Heart right ventricle (tissue), 16 donors: ENCODE measurements at regions of chr18 and their contacts with region 1.

Region 1: GRCh38 chr18:22563098-22563707 is 145.5 kb upstream of the CTAGE1 start:
- DNase-seq: peak in 1 of 2 donors; percentile 68
- ATAC-seq: peak; percentile 63 to 77 (median 72)
- H3K4me3 ChIP-seq: peak overlapping the region in 9 of 10 donors; percentile 19 to 74 (median 57)
- H3K27ac ChIP-seq: peak overlapping the region; percentile 87 to 99 (median 96)
- H3K4me1 ChIP-seq: peaks cover 0 to 38% (median 27%) of the 10 kb centered on the region in 9 donors
- H3K27me3 ChIP-seq: peaks cover 0 to 47% (median 0%) of the 10 kb centered on the region in 7 donors
- CTCF ChIP-seq: peak; percentile 56 to 87 (median 82)

Region 2: GRCh38 chr18:21914739-21915319 is 648.4 kb before region 1 on chr18:
- intact Hi-C with region 1: loop called in 6 of 10 experiments (anchors 5 to 10 kb)
- DNase-seq: peak in 1 of 2 donors; percentile 13
- ATAC-seq: peak in 7 of 8 donors; percentile 55 to 79 (median 65)
- H3K4me3 ChIP-seq: no peak overlapping the region
- H3K27ac ChIP-seq: no peak overlapping the region
- H3K4me1 ChIP-seq: no peaks in the 10 kb centered on the region
- H3K27me3 ChIP-seq: no peaks in the 10 kb centered on the region
- CTCF ChIP-seq: peak in 8 of 9 donors; percentile 20 to 67 (median 56)

Region 3: DNA sequence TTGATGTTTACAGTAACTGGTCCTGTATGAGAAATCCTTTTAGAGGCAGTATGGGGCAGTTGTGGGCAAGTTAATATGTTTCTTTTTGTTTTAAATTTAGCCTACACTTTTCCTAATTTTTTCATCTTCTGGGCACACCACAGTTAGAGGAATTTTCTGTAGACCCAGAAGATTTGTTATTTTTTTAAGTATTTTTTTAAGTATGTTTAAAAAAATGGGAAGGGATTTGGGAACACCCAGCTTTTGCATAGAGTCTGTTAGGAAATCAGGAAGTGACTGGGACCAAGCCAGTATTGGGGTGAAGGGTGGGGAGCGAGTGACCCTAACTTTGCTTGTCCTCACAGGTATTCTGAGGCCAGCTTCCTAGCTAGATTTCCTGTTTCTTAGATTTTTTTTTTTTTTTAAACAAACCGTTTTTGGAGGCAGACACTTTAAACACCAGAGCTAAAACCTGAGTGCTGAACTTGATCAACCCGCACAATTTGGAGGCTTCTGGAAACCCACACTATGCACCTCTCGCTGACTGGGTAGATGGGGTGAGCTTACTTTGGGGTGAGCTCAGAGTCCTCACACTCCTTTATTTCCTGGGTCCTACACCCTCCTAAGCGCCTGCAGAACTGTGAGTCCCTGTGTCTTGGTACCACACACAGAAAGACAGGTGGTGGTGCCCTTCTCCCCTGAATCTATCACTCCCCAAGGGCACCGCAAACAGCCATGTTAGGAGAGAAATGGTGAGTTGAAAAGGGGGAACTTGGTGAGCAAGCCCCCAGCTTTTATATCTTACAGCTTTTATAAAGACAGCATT is 388.7 kb before region 1 on chr18:
- intact Hi-C with region 1: loop called (anchors 2 to 10 kb)
- DNase-seq: no peak
- ATAC-seq: peak in 5 of 8 donors; percentile 16 to 62 (median 44)
- H3K4me3 ChIP-seq: peak overlapping the region; percentile 23 to 97 (median 85)
- H3K27ac ChIP-seq: peak overlapping the region; percentile 80 to 100 (median 97)
- H3K4me1 ChIP-seq: peaks cover 0 to 34% (median 11%) of the 10 kb centered on the region in 9 donors
- H3K27me3 ChIP-seq: peaks cover 0 to 98% (median 0%) of the 10 kb centered on the region in 7 donors
- CTCF ChIP-seq: peak in 5 of 9 donors; percentile 4 to 35 (median 30)

Region 4: GRCh38 chr18:22348521-22349316 is 214.5 kb before region 1 on chr18:
- intact Hi-C with region 1: loop called in 4 of 10 experiments (anchors 2 to 5 kb)
- DNase-seq: peak; percentile 68 to 81
- ATAC-seq: peak; percentile 67 to 79 (median 74)
- H3K4me3 ChIP-seq: peak overlapping the region; percentile 18 to 65 (median 58)
- H3K27ac ChIP-seq: peak overlapping the region; percentile 88 to 97 (median 94)
- H3K4me1 ChIP-seq: peaks cover 10 to 64% (median 44%) of the 10 kb centered on the region in 9 donors
- H3K27me3 ChIP-seq: peaks cover 0 to 45% (median 0%) of the 10 kb centered on the region in 7 donors
- CTCF ChIP-seq: peak in 1 of 9 donors; percentile 17

Region 5: GRCh38 chr18:22385718-22386117 is 177.5 kb before region 1 on chr18:
- intact Hi-C with region 1: loop called in 1 of 10 experiments (anchors 10 kb)
- DNase-seq: no peak
- ATAC-seq: no peak
- H3K4me3 ChIP-seq: no peak overlapping the region
- H3K27ac ChIP-seq: peak overlapping the region in 1 of 10 donors; percentile 8
- H3K4me1 ChIP-seq: peaks cover 0 to 11% (median 0%) of the 10 kb centered on the region in 9 donors
- H3K27me3 ChIP-seq: no peaks in the 10 kb centered on the region
- CTCF ChIP-seq: no peak

Region 6: GRCh38 chr18:22459491-22459890 is 103.7 kb before region 1 on chr18:
- intact Hi-C with region 1: no loop called
- DNase-seq: no peak
- ATAC-seq: no peak
- H3K4me3 ChIP-seq: no peak overlapping the region
- H3K27ac ChIP-seq: no peak overlapping the region
- H3K4me1 ChIP-seq: peaks cover 0 to 32% (median 12%) of the 10 kb centered on the region in 9 donors
- H3K27me3 ChIP-seq: no peaks in the 10 kb centered on the region
- CTCF ChIP-seq: no peak

Region 7: GRCh38 chr18:22485808-22486244 is 77.4 kb before region 1 on chr18:
- intact Hi-C with region 1: no loop called
- DNase-seq: no peak
- ATAC-seq: peak in 1 of 8 donors; percentile 18
- H3K4me3 ChIP-seq: no peak overlapping the region
- H3K27ac ChIP-seq: no peak overlapping the region
- H3K4me1 ChIP-seq: peaks cover 0 to 28% (median 12%) of the 10 kb centered on the region in 9 donors
- H3K27me3 ChIP-seq: no peaks in the 10 kb centered on the region
- CTCF ChIP-seq: no peak

Region 8: GRCh38 chr18:22517356-22517755 is 45.8 kb before region 1 on chr18:
- intact Hi-C with region 1: loop called in 1 of 10 experiments (anchors 10 kb)
- DNase-seq: no peak
- ATAC-seq: peak in 6 of 8 donors; percentile 34 to 92 (median 66)
- H3K4me3 ChIP-seq: no peak overlapping the region
- H3K27ac ChIP-seq: peak overlapping the region in 2 of 10 donors; percentile 34 to 46
- H3K4me1 ChIP-seq: peaks cover 0 to 25% (median 18%) of the 10 kb centered on the region in 9 donors
- H3K27me3 ChIP-seq: no peaks in the 10 kb centered on the region
- CTCF ChIP-seq: no peak